GM10248 (cell line): ENCODE measurements at regions of chr1 and their contacts with region 1.

Region 1: GRCh38 chr1:206507284-206508129 is at the start of gene RASSF5:
- DNase-seq: peak; percentile 90
- CTCF ChIP-seq: no peak

Region 2: GRCh38 chr1:206419250-206419649 is 88.3 kb before region 1 on chr1:
- CTCF ChIA-PET with region 1: no interaction called
- POLR2A ChIA-PET with region 1: no interaction called
- DNase-seq: no peak
- CTCF ChIP-seq: no peak

Region 3: GRCh38 chr1:206496131-206496793 is 11.2 kb before region 1 on chr1:
- CTCF ChIA-PET with region 1: interaction called, 50 read pairs
- POLR2A ChIA-PET with region 1: interaction called, 8 read pairs
- DNase-seq: peak; percentile 75
- CTCF ChIP-seq: no peak

Region 4: DNA sequence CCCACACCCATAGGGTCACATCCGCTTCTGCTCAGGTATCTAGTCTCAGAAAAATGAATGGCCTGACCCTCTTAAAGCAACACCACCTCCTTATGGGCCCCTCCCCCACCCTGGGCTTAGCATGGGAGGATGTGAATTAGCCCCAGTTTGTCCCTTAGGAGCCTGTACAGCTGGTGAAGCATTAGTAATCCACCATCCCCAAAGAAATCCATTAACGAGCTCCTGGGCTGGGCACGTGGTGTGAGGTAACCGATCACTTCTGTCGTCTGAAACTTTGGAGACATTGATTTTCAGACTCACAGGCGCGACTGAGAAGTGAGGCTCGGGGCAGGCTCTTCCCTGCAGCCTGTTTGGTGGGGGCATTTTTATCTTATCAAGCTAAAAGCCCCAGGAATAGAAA is 10.3 kb after region 1 on chr1:
- CTCF ChIA-PET with region 1: interaction called, 13 read pairs
- POLR2A ChIA-PET with region 1: interaction called, 6 read pairs
- DNase-seq: no peak
- CTCF ChIP-seq: no peak

Region 5: DNA sequence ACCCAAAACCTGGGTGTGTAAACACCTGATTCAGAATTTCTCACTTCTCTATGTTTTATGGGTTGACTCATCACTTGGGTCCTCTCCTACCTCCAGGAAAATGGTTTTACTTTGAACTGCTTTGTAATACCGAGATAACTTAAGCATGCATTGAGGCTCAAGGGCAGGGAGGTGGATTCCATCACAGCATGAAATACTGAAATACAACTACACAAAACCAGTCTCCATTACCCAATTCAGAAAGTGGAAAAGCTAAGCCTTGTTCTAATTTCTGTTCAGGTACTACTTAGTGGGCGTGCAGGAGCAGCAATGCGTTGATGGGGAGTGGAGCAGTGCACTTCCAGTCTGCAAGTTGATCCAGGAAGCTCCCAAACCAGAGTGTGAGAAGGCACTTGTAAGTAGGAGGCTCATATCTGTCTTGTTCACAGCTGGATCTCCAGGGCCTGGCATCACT is 590.4 kb after region 1 on chr1:
- CTCF ChIA-PET with region 1: no interaction called
- POLR2A ChIA-PET with region 1: no interaction called
- DNase-seq: peak; percentile 59
- CTCF ChIP-seq: no peak